ENCODE measurements at regions of chr5 and their contacts with region 1.

Region 1: DNA sequence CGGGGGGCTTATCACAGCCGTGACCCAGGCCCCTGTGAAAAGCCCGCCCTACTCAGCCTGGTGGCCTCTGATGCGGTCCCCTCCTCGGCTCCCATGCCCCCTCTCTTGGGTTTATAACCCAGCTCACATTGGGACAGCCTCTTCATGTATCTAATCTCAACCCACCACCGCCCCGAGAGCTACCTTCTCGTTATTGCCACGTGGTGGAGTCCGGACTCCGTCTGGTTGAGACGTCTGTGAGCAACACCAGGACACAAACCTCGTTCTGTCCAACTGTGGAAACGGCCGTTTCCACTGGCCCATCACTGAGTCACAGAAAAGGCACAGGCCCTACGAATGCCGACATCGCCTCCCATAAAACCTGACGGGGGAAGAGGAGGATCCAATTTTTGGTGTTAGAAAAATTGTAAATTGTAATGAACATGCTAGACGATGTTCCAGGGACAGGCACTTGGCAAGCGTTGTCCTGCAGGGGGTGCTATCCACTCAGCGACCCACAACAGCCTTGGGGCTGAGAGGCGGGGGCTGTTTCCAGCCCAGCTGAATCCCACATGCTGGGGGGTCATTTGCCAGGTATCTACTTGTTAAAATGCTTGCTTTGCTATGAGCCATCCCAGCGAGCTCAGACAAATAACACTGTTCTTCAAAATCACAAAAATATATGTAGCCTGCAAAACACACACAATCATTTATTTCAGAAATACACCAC is 37.3 kb upstream of the N4BP3 start:
- DNase-seq: peak; percentile 83
- ATAC-seq: peak; percentile 72
- H3K4me3 ChIP-seq: peak overlapping the region; percentile 25; the same call in 1 of the 2 replicates
- H3K27ac ChIP-seq: no peak overlapping the region
- H3K4me1 ChIP-seq: peaks cover 12% of the 10 kb centered on the region
- H3K27me3 ChIP-seq: peaks cover 39% of the 10 kb centered on the region
- CTCF ChIP-seq: peak; percentile 100

Region 2: GRCh38 chr5:178146020-178146820 is 70.2 kb after region 1 on chr5:
- CTCF ChIA-PET with region 1: interaction called, 16 read pairs
- POLR2A ChIA-PET with region 1: no interaction called
- intact Hi-C with region 1: loop called (anchors 1 kb)
- DNase-seq: peak; percentile 79
- ATAC-seq: peak; percentile 87
- H3K4me3 ChIP-seq: no peak overlapping the region
- H3K27ac ChIP-seq: peak overlapping the region; percentile 66
- H3K4me1 ChIP-seq: peaks cover 14% of the 10 kb centered on the region
- H3K27me3 ChIP-seq: no peaks in the 10 kb centered on the region
- CTCF ChIP-seq: peak; percentile 94

Region 3: DNA sequence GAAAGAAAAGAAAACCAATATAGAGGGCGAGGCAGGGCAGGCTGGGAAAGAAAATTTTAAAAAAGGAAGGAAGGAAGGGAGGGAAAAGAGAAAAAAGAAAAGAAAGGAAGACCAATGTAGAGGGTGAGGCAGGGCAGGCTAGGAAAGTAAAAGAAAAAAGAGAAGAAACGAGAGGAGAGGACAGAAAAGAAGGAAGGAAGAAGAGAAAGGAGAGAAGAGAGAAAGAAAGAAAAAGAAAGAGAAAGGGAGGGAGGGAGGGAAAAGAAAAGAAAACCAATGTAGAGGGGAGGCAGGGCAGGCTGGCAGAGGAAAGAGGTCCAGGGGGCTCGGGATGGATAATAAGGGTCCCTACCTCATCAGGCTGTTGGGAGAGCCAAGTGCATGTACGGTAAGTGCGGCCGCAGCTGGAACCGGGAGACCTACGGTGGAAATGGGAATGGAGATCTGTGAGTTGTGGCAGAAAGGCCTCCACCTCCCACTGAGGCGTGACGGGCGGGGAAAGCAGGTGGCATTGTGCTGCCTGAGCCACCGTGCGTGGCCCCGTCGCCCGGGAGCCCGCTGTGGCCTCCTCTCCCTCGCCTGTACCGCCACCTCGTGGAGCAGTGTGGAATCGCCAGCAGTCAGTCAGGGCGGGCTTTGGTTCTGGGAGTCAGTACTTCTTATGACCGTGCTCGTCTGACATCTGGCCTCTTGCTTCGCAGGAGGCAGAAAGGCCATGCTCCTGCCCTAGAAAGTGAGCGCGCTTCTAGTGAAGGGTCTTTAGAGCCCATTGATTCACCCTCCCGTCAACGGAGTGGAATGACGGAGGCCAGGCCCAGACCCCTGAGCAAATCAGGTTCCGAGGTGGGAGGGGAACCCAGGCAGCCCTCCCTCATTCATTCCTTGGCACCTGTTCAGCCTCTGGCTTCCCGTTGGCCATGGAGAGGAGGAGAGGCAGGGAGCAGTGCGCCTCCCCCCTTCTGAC is 88.1 kb after region 1 on chr5:
- CTCF ChIA-PET with region 1: interaction called, 8 read pairs
- POLR2A ChIA-PET with region 1: no interaction called
- intact Hi-C with region 1: loop called (anchors 1 kb)
- DNase-seq: peak; percentile 92
- ATAC-seq: peak; percentile 98
- H3K4me3 ChIP-seq: peak overlapping the region; percentile 49; the same call in 1 of the 2 replicates
- H3K27ac ChIP-seq: no peak overlapping the region
- H3K4me1 ChIP-seq: no peaks in the 10 kb centered on the region
- H3K27me3 ChIP-seq: no peaks in the 10 kb centered on the region
- CTCF ChIP-seq: peak; percentile 95

Region 4: DNA sequence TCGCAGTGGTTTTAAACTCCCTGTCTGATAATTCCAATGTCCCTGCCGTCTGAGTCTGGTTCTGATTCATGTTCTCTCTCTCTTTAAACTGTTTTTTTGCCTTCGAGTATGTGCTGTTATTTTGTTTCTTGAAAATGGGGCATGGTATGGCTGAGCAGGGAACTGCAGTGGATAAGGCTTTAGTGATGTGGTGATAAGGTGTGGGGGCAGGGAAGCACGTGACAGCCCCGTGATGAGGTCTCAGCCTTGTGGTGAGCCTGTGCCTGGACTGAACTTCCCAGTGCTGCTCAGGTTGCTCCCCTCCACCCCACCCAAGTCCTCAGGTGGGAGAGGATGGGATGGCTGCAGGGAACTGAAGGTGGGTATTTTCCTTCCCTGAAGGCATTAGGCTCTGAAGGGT is 778.3 kb after region 1 on chr5:
- CTCF ChIA-PET with region 1: no interaction called
- POLR2A ChIA-PET with region 1: no interaction called
- intact Hi-C with region 1: no loop called
- DNase-seq: no peak
- ATAC-seq: no peak
- H3K4me3 ChIP-seq: no peak overlapping the region
- H3K27ac ChIP-seq: no peak overlapping the region
- H3K4me1 ChIP-seq: no peaks in the 10 kb centered on the region
- H3K27me3 ChIP-seq: peaks cover 6% of the 10 kb centered on the region; the same call in 1 of the 2 replicates
- CTCF ChIP-seq: no peak